Activated naive CD4-positive, alpha-beta T cell treated with anti-CD3 and anti-CD28 coated beads for 36 hours (primary cell): ENCODE measurements at regions of chr15 and their contacts with region 1.

Region 1: GRCh38 chr15:42273102-42273899 is at the starts of genes GANC and TMEM87A:
- DNase-seq: peak; percentile 98
- H3K4me3 Mint-ChIP-seq: peak within 1 kb of the TSS; percentile 99
- H3K27ac Mint-ChIP-seq: peak within 1 kb of the TSS; percentile 99
- H3K4me1 Mint-ChIP-seq: peaks cover 45% of the 10 kb centered on the region
- H3K27me3 Mint-ChIP-seq: no peaks in the 10 kb centered on the region
- total RNA-seq, gene GANC: 27.4 to 27.7 TPM
- total RNA-seq, gene TMEM87A: 26.6 to 28.4 TPM

Region 2: GRCh38 chr15:42107473-42107872 is 165.8 kb before region 1 on chr15:
- CTCF ChIA-PET with region 1: no interaction called
- intact Hi-C with region 1: loop called (anchors 1 kb)
- DNase-seq: peak; percentile 89
- H3K4me3 Mint-ChIP-seq: no peak overlapping the region
- H3K27ac Mint-ChIP-seq: peak overlapping the region; percentile 22
- H3K4me1 Mint-ChIP-seq: peaks cover 22% of the 10 kb centered on the region
- H3K27me3 Mint-ChIP-seq: peaks cover 16% of the 10 kb centered on the region

Region 3: DNA sequence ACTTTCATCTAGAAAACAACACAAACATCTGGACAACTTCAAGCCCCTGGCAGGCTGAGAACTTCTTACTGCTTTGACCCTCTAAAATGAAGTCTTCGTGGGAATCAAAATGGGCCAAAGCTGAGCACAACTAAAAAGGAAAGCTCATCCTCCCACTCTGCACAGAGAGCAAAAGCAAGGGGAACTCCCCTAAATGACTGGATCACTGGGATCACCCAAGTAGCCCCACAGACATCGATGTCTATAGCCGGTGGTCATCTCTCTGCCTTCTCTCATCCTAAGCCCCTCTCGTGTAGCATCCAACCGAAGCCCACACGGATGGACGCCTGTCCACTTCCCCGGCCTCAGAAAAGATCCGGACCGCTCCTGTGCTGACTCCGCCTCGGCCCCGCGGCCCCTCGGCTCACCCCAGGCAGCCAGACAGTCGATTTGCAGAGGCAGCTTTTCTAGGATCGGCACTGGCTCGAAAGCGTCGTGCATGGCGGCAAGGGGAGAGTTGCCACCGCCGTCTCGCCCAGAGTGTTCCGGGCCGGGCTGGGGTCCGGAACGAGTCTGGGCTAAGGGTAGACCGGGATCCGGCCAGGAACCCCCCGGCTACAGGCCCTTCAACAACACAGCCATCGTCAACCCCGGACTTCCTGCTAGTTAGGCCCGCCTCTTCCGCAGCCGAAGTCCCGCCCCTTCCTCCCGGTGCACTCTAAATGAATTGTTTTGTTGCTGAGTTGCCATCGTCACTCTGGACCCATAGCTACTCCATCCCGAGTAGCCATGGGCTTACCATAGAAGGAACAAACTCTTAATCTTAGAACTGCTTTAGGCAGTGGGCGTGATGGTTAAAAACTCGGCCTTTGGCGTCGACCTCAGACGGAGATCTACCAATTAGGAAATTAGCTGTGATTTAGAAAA is 65.4 kb before region 1 on chr15 and contains the start of gene VPS39:
- CTCF ChIA-PET with region 1: no interaction called
- intact Hi-C with region 1: loop called (anchors 1 kb)
- DNase-seq: peak; percentile 92
- H3K4me3 Mint-ChIP-seq: peak within 1 kb of the TSS; percentile 88
- H3K27ac Mint-ChIP-seq: peak within 1 kb of the TSS; percentile 92
- H3K4me1 Mint-ChIP-seq: peaks cover 33% of the 10 kb centered on the region
- H3K27me3 Mint-ChIP-seq: no peaks in the 10 kb centered on the region
- total RNA-seq, gene VPS39: 58.9 to 60.7 TPM

Region 4: DNA sequence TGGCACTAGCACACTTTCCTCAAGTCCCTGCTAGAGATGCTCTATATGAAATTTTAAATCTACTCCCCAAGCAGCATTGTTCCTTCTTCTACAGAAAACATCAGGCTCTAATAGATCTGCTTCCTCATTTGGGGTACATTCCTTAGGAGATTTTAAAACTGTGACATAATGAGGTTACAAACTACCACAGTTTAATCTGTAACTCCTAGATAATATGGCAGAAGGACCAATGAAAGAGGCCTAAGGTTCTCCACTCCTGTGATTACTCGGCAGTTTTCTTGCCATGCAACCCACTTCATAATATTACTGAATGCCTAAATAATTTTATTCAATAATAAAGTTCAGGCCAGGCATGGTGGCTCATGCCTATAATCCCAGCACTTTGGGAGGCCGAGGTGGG is 201.5 kb after region 1 on chr15:
- CTCF ChIA-PET with region 1: no interaction called
- intact Hi-C with region 1: loop called (anchors 2 kb)
- DNase-seq: no peak
- H3K4me3 Mint-ChIP-seq: no peak overlapping the region
- H3K27ac Mint-ChIP-seq: no peak overlapping the region
- H3K4me1 Mint-ChIP-seq: peaks cover 7% of the 10 kb centered on the region
- H3K27me3 Mint-ChIP-seq: no peaks in the 10 kb centered on the region

Region 5: DNA sequence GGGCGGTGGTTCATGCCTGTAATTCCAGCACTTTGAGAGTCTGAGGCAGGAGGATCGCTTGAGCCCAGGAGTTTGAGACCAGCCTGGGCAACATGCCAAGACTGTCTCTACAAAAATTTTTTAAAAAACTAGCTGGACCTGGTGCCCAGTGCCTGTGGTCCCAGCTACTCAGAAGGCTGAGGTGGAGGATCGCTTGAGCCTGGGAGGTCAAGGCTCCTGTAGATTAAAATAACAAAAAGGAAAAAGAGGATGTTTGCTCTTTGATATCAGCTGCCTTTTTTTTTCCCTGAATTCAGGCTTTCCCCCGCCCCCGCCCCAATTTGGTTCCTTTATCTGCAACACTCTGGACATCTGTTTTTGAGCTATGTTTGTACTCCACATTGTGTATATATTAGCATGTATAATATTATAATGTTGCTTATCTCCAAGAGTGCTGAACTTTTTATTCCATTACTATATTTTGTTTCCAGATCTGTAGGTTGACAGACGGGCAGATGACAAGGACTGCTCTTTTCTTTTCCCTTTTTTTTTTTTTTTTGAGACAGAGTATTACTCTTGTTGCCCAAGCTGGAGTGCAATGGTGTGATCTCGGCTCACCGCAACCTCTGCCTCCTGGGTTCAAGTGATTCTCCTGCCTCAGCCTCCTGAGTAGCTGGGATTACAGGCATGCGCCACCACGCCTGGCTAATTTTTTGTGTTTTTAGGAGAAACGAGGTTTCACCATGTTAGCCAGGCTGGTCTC is 226.7 kb after region 1 on chr15:
- CTCF ChIA-PET with region 1: no interaction called
- intact Hi-C with region 1: no loop called
- DNase-seq: no peak
- H3K4me3 Mint-ChIP-seq: no peak overlapping the region
- H3K27ac Mint-ChIP-seq: no peak overlapping the region
- H3K4me1 Mint-ChIP-seq: peaks cover 49% of the 10 kb centered on the region
- H3K27me3 Mint-ChIP-seq: no peaks in the 10 kb centered on the region

Region 6: GRCh38 chr15:42548253-42549031 is 275.1 kb after region 1 on chr15 and contains the starts of genes HAUS2 and LRRC57:
- CTCF ChIA-PET with region 1: no interaction called
- intact Hi-C with region 1: loop called (anchors 2 kb)
- DNase-seq: peak; percentile 90
- H3K4me3 Mint-ChIP-seq: peak within 1 kb of the TSS; percentile 95
- H3K27ac Mint-ChIP-seq: peak within 1 kb of the TSS; percentile 89
- H3K4me1 Mint-ChIP-seq: peaks cover 41% of the 10 kb centered on the region
- H3K27me3 Mint-ChIP-seq: no peaks in the 10 kb centered on the region
- total RNA-seq, gene HAUS2: 46.2 to 55.6 TPM
- total RNA-seq, gene LRRC57: 14.7 to 16.3 TPM

Region 7: GRCh38 chr15:42736793-42737528 is 463.7 kb after region 1 on chr15 and contains the start of gene CDAN1:
- CTCF ChIA-PET with region 1: no interaction called
- intact Hi-C with region 1: loop called (anchors 1 kb)
- DNase-seq: peak; percentile 92
- H3K4me3 Mint-ChIP-seq: peak within 1 kb of the TSS; percentile 78
- H3K27ac Mint-ChIP-seq: peak within 1 kb of the TSS; percentile 69
- H3K4me1 Mint-ChIP-seq: peaks cover 11% of the 10 kb centered on the region
- H3K27me3 Mint-ChIP-seq: no peaks in the 10 kb centered on the region
- total RNA-seq, gene CDAN1: 19.9 to 21.9 TPM

Region 8: DNA sequence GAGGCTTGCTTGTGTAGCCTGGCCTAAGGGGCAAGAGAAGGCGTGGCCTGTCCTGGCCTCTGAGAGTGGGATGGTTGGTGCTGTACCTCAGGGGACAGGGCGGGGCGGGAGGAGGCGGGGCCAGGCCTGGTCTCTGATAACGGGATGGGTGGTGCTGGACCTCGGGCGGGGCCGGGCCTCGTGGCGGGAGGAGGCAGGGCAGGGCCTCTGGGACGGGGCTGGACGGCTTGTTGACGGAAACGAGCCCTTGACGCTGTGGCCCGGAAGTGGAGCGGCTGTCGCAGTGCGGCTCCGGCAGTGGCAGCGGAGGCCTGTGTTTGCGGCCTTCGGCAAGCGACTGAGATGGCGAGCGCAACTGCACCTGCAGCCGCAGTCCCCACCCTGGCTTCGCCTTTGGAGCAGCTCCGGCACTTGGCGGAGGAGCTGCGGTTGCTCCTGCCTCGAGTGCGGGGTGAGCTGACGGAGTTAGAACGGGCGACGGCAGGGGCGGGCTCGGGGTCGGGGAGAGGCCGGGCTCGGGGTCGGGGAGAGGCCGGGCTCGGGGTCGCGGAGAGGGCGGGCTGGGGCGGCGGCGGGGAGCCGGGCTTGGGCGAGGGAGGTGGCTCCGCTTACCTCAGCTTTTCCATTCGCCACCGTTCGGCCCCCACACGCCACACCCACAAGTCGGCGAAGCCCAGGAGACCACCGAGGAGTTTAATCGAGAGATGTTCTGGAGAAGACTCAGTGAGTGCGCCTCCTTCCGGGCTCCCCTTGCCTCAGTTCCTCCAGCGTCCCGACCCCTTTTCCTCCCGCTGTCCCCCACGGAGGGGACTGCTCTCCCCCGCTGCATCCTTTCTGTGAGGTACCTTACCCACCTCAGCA is 912.1 kb after region 1 on chr15 and contains the start of gene CCNDBP1:
- CTCF ChIA-PET with region 1: no interaction called
- intact Hi-C with region 1: loop called (anchors 10 kb)
- DNase-seq: peak; percentile 94
- H3K4me3 Mint-ChIP-seq: peak within 1 kb of the TSS; percentile 93
- H3K27ac Mint-ChIP-seq: peak within 1 kb of the TSS; percentile 91
- H3K4me1 Mint-ChIP-seq: peaks cover 15% of the 10 kb centered on the region
- H3K27me3 Mint-ChIP-seq: no peaks in the 10 kb centered on the region
- total RNA-seq, gene CCNDBP1: 54.6 to 62.1 TPM